ENCODE measurements at regions of chr15 and their contacts with region 1.

Region 1: GRCh38 chr15:96347181-96348111 is 16.9 kb downstream of the NR2F2 start:
- DNase-seq: no peak
- H3K4me3 ChIP-seq: peak overlapping the region in 1 of 4 donors; percentile 56
- H3K27ac ChIP-seq: peak overlapping the region; percentile 94 to 98 (median 96)
- H3K4me1 ChIP-seq: peaks cover 0 to 44% (median 25%) of the 10 kb centered on the region in 4 donors
- H3K27me3 ChIP-seq: peaks cover 22% of the 10 kb centered on the region
- CTCF ChIP-seq: no peak
- EP300 ChIP-seq: no peak
- POLR2A ChIP-seq: no peak

Region 2: GRCh38 chr15:96300836-96301235 is 46.6 kb before region 1 on chr15:
- in situ Hi-C with region 1: no loop called
- intact Hi-C with region 1: loop called (anchors 1 kb)
- DNase-seq: no peak
- H3K4me3 ChIP-seq: no peak overlapping the region
- H3K27ac ChIP-seq: no peak overlapping the region
- H3K4me1 ChIP-seq: no peaks in the 10 kb centered on the region
- H3K27me3 ChIP-seq: no peaks in the 10 kb centered on the region
- CTCF ChIP-seq: no peak
- EP300 ChIP-seq: no peak
- POLR2A ChIP-seq: no peak

Region 3: GRCh38 chr15:96321639-96322535 is 25.6 kb before region 1 on chr15:
- in situ Hi-C with region 1: no loop called
- intact Hi-C with region 1: loop called (anchors 1 kb)
- DNase-seq: no peak
- H3K4me3 ChIP-seq: peak overlapping the region; percentile 22 to 48 (median 34)
- H3K27ac ChIP-seq: peak overlapping the region; percentile 81 to 91 (median 88)
- H3K4me1 ChIP-seq: peaks cover 0 to 44% (median 10%) of the 10 kb centered on the region in 4 donors
- H3K27me3 ChIP-seq: peaks cover 99% of the 10 kb centered on the region
- CTCF ChIP-seq: no peak
- EP300 ChIP-seq: no peak
- POLR2A ChIP-seq: no peak

Region 4: GRCh38 chr15:98164571-98164970 is 1817.1 kb after region 1 on chr15:
- in situ Hi-C with region 1: no loop called
- intact Hi-C with region 1: no loop called
- DNase-seq: no peak
- H3K4me3 ChIP-seq: no peak overlapping the region
- H3K27ac ChIP-seq: no peak overlapping the region
- H3K4me1 ChIP-seq: no peaks in the 10 kb centered on the region
- H3K27me3 ChIP-seq: no peaks in the 10 kb centered on the region
- CTCF ChIP-seq: no peak
- EP300 ChIP-seq: no peak
- POLR2A ChIP-seq: no peak

Measured in transverse colon (tissue), 4 donors.